Heart left ventricle (tissue), 16 donors: ENCODE measurements at regions of chr18 and their contacts with region 1.

Region 1: DNA sequence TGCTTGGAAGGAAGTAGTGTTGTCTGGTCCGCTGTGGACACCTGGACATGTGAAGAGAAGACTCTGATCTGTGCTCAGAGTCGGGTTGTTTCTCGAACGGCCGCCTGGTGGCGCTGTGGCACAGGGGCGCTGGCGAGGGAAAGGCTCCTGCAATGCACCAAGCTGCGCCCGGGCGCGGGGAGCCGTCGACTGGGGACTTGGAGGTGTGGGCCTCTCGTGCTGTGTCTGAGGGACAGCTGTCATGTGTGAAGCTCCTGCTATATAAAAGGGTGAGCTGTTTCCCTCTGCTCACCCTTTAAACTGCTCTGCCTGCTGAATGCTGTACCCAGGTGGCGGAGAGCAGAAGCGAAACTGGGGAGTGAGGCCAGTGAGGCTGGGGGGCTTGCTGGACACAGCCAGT is 44.0 kb downstream of the GNAL start:
- DNase-seq: peak; percentile 63 to 88 (median 78)
- ATAC-seq: peak in 3 of 4 donors; percentile 90 to 96 (median 91)
- H3K4me3 ChIP-seq: peak overlapping the region in 8 of 12 donors; percentile 10 to 49 (median 28)
- H3K27ac ChIP-seq: no peak overlapping the region
- H3K4me1 ChIP-seq: peaks cover 0 to 4% (median 0%) of the 10 kb centered on the region in 12 donors
- H3K27me3 ChIP-seq: peaks cover 0 to 49% (median 8%) of the 10 kb centered on the region in 9 donors
- CTCF ChIP-seq: peak; percentile 72 to 93 (median 88)
- POLR2A ChIP-seq: no peak

Region 2: DNA sequence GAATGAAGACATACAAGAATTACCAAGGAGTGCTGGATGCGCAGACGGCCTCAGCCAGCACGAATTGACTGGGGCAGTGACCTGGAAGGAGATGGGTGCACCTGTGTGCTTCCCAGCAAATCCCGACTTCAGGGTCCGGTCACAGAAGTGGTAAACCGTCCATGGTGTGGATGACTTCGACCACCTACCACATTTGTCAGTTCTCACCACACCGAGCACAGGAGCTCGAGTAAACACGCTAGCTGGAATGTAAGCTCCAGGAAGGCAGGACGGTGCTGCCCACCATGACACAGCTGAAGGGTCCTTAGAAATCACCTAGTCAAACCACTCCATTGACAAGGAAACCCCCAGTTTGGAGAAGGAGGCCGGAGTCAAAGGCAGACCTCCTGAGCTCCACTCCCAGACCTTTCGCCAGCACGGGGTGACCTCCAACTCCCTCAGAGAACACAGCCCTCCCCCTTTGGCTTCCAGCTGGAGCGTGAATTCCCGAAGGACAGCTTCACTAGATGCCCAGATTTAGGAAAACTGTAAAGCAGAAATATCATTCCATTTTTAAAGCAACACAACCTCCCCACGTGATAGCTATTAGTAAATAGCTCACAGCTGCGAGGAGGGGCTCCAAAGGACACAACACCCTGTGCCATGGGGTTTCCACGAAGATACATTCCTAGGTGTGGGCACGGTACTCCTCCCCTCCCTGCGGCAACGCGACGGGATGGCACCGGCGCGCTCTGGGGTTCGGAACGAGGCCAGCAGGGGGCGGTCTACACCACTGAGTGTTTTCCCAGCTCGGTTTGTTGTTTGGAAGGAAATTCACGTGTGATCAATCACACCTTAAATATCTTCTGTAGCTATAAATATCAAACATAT is 78.1 kb before region 1 on chr18:
- intact Hi-C with region 1: loop called in 4 of 10 experiments (anchors 5 to 10 kb)
- DNase-seq: peak in 3 of 5 donors; percentile 20 to 50 (median 42)
- ATAC-seq: peak in 3 of 4 donors; percentile 70 to 77 (median 72)
- H3K4me3 ChIP-seq: peak overlapping the region in 1 of 12 donors; percentile 5
- H3K27ac ChIP-seq: no peak overlapping the region
- H3K4me1 ChIP-seq: peaks cover 0 to 5% (median 0%) of the 10 kb centered on the region in 12 donors
- H3K27me3 ChIP-seq: peaks cover 0 to 31% (median 0%) of the 10 kb centered on the region in 9 donors
- CTCF ChIP-seq: peak; percentile 55 to 81 (median 70)
- POLR2A ChIP-seq: no peak

Region 3: DNA sequence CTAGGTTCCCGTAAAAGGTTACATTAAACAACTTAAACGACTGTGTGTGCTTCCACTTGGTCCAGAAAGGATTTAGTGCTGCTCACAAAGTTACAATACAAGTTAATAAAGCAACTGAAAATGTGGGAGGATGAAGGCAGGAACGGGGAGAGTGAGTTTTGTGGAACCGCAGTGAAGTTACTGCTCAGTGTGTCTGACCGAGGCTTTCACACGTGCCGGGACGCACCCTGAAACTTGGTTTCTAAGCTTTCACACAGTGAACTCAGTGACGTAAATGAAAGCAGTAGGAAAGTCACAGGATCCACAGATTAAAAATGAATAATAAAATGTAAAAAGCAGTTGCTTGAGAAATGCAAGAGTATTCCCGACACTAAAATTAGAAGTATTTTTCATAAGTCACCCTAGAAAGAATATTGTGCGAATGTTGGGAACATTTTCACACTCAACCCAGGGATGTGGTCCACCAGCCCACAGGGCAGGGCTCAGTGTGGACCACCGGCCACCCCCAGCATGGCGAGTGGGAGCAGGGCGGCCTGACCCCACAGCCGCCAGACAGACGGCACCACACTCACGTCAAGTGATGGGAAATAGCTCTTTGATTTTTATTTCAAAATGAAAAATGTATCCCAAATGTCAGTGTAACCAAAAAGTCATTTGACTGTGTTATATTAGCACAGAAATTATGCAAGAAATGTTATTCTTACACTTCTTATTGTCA is 85.6 kb after region 1 on chr18:
- intact Hi-C with region 1: no loop called
- DNase-seq: no peak
- ATAC-seq: no peak
- H3K4me3 ChIP-seq: no peak overlapping the region
- H3K27ac ChIP-seq: no peak overlapping the region
- H3K4me1 ChIP-seq: no peaks in the 10 kb centered on the region
- H3K27me3 ChIP-seq: no peaks in the 10 kb centered on the region
- CTCF ChIP-seq: no peak
- POLR2A ChIP-seq: no peak

Region 4: DNA sequence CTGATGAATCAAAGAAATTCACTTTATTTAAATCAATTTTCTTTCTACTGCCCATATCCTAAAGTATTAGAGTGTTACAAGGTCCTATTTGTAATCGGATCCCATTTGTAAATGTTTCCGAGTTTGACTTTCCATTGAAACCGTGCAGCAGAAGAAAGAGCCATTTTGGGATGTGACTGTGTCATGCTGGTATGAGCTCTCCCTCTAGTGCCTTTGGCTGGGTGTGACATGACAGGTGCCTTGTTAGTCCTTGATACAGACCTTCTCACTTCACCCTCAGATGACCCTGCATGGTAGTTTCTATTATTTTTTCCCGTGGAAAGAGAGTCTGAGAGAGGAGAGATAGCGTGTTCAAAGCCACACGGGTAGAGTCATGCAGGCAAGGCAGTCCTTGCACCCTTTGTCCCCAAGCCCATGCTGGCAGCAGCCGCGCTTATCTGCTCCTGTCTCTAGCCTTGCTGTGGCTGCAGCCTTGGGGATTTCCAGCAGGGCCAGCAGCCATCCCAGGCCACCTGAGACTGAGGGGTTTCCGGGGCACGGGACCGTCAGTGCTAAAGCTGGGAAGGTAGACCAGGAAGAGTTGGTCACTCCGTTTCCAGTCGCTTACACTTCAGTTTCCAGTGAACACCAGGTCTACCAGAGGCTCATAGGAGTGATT is 139.6 kb after region 1 on chr18:
- intact Hi-C with region 1: loop called in 9 of 10 experiments (anchors 1 to 5 kb)
- DNase-seq: peak in 3 of 5 donors; percentile 25 to 67 (median 50)
- ATAC-seq: peak; percentile 82 to 97 (median 94)
- H3K4me3 ChIP-seq: no peak overlapping the region
- H3K27ac ChIP-seq: peak overlapping the region in 6 of 12 donors; percentile 18 to 61 (median 44)
- H3K4me1 ChIP-seq: peaks cover 0 to 6% (median 0%) of the 10 kb centered on the region in 12 donors
- H3K27me3 ChIP-seq: peaks cover 0 to 3% (median 0%) of the 10 kb centered on the region in 9 donors
- CTCF ChIP-seq: peak in 11 of 12 donors; percentile 19 to 63 (median 46)
- POLR2A ChIP-seq: no peak

Region 5: DNA sequence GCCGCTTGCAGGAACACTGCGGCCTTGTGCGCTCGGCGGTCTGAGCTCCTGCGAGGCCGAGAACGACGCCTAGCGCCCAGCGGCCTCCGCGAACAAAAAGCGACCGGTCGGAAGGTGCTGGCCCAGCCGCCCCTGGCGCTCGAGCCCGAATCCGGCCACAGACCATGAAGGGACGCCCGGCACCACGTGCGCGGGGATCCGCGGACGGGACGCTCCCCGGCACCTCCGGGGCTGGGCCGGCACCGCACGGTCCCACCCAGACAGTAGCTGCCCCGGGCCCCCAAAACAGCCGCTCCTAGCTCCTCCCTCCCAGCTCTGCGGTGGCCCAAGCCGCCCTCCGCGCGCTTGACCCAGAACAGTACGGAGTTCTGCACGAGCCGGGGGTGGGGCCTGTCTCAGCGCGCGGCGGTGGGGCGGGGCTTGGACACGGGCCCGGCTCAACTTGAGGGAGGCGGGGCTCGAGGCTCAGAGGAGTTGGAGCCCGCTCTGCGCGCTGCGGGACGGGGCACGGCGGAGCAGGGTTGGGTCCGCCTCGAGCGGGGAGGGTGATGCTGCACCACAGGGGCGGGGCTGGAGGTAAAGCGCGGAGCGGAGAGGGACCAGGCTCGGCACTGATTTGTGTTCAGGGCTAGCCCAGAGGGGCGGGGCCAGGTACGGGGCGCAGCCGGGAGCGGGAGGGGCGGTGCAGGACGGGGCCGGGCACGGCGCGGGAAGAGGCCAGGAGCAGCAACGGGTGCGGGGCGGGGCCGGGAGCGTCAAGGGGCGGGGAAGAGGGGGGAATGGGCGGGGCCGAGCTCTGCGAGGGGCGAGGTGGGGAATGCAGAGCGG is 247.7 kb after region 1 on chr18:
- intact Hi-C with region 1: loop called in 1 of 10 experiments (anchors 5 kb)
- DNase-seq: peak; percentile 97 to 99 (median 99)
- ATAC-seq: peak; percentile 93 to 96 (median 95)
- H3K4me3 ChIP-seq: peak overlapping the region; percentile 70 to 97 (median 89)
- H3K27ac ChIP-seq: peak overlapping the region; percentile 83 to 99 (median 95)
- H3K4me1 ChIP-seq: peaks cover 0 to 47% (median 16%) of the 10 kb centered on the region in 12 donors
- H3K27me3 ChIP-seq: no peaks in the 10 kb centered on the region
- CTCF ChIP-seq: peak in 4 of 12 donors; percentile 32 to 43 (median 36)
- POLR2A ChIP-seq: peak; percentile 68 to 96

Region 6: DNA sequence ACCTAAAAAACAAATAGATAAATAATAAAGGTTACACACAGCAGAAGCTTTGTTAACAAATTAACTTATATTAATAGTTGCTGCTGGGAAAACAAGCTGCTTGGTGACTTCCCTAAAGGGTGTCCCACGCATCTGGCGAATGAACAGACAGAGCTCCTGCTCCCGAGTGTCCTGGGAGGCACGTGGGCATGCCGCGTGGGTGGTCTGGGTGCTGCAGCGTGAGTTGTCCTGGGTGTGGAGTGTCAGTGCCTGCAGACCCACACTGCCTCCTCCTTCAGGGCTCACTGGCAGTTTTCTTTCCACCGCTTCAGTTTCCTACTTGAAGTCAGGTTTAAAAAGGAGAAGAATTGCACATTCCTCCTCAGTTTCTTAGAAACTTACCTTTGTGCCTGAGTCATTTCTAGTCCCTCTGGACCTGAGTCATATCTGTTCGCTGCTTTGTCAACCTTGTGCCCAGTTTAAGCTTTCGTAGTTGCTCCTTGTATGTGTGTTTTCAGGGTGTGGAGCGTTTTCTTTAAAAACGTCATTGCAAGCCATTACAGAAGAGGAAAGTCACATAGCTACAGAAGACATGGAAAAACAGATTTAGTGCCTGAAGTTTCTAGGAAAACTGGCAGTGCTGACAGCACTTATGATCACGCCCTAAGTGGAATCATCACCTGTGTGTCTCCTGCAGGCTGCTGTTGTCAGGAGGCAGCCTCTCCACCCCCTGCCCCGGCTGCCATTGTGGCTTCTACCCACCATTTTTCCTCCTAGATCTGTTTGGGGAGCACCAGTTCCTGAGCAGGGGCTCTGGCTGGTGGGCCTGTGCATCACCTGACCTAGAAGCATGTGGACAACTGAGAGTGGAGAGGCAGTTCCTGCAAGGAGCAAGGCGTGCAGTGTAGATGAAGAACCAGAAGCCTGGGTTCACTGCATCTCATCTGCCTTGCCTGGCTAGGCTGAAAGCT is 272.8 kb after region 1 on chr18:
- intact Hi-C with region 1: loop called in 1 of 10 experiments (anchors 10 kb)
- DNase-seq: no peak
- ATAC-seq: no peak
- H3K4me3 ChIP-seq: no peak overlapping the region
- H3K27ac ChIP-seq: no peak overlapping the region
- H3K4me1 ChIP-seq: peaks cover 0 to 5% (median 0%) of the 10 kb centered on the region in 12 donors
- H3K27me3 ChIP-seq: no peaks in the 10 kb centered on the region
- CTCF ChIP-seq: no peak
- POLR2A ChIP-seq: no peak

Region 7: DNA sequence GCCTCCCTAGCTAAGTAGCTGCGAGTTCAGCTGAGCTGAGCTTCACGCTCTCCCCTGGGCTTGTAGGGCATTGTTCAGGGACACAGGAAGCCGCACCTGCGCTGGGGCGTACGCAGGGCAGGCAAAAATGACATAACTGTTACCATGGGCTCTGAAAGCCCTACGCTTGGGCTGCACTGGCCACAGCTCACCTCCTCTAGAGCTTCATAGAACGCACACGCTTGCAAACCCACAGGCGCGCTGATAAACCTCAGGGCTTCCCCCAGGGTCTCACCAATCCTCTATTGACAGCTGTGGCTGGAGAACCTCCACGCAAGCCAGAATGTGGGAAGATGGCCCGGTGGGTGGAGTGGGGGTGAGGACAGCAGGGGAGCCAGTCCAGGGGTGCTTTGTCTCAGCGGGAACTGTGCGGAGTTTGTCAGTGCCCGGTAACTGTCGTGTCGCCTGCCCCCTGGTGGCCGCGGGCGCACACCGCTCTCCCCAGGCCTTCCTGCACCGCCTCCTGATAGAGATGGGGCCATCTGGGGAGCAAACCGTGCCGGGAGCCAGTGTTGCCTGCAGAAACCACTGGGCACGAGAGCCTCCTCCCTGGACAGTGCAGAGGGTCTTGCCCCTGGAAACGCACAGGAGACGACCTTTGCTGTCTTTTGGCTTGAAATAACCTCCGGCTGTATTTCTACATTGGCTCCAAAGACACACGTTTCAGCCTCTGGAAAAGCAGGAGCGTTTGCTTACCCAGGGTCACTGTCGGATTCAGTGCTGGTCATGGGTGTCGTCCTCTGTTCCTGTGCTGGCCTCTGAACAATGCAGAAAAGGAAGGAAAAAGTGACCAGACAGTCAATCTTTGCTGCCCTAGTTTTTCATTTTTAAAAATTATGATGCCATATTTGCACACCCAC is 504.2 kb after region 1 on chr18:
- intact Hi-C with region 1: loop called in 2 of 10 experiments (anchors 5 to 10 kb)
- DNase-seq: peak; percentile 71 to 87 (median 75)
- ATAC-seq: peak; percentile 90 to 97 (median 95)
- H3K4me3 ChIP-seq: no peak overlapping the region
- H3K27ac ChIP-seq: no peak overlapping the region
- H3K4me1 ChIP-seq: peaks cover 0 to 6% (median 0%) of the 10 kb centered on the region in 12 donors
- H3K27me3 ChIP-seq: peaks cover 0 to 10% (median 0%) of the 10 kb centered on the region in 9 donors
- CTCF ChIP-seq: peak; percentile 85 to 92 (median 88)
- POLR2A ChIP-seq: no peak